ENCODE measurements at regions of chr11 and their contacts with region 1.

Region 1: GRCh38 chr11:22307065-22307464 is 31.1 kb upstream of the SLC17A6 start:
- DNase-seq: no peak
- ATAC-seq: no peak

Region 2: GRCh38 chr11:22169833-22170232 is 137.2 kb before region 1 on chr11:
- intact Hi-C with region 1: loop called (anchors 5 kb)
- DNase-seq: no peak
- ATAC-seq: no peak

Region 3: GRCh38 chr11:22192642-22193347 is 114.3 kb before region 1 on chr11 and contains the start of gene ANO5:
- intact Hi-C with region 1: no loop called
- DNase-seq: peak; percentile 85
- ATAC-seq: peak; percentile 95
- total RNA-seq, gene ANO5: 68.9 TPM

Measured in Right ventricle myocardium superior (tissue), 1 donor.